MCF 10A (cell line): ENCODE measurements at regions of chr14 and their contacts with region 1.

Region 1: DNA sequence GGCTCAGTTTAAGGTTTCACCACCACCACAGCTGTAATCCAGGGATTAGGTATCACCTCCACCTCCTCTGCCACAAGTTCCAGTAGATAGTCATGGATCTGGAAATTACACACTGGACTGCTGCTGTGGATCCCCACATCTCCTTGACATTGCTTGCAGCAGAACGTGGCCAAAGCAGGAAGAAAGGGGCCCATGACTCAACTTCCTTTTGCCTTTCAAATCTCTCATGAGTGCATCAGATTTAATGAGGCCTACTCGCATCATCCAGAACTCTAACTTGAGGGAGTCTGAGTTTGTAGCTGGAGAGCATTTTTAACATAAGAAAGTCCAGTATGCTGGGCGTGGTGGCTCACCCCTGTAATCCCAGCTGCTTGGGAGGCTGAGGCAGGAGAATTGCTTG is 29.2 kb upstream of the TMED10 start:
- DNase-seq: peak; percentile 12
- H3K4me3 Mint-ChIP-seq: no peak overlapping the region
- H3K27ac Mint-ChIP-seq: no peak overlapping the region
- H3K4me1 Mint-ChIP-seq: peaks cover 20% of the 10 kb centered on the region
- H3K27me3 Mint-ChIP-seq: no peaks in the 10 kb centered on the region
- CTCF ChIP-seq: no peak

Region 2: DNA sequence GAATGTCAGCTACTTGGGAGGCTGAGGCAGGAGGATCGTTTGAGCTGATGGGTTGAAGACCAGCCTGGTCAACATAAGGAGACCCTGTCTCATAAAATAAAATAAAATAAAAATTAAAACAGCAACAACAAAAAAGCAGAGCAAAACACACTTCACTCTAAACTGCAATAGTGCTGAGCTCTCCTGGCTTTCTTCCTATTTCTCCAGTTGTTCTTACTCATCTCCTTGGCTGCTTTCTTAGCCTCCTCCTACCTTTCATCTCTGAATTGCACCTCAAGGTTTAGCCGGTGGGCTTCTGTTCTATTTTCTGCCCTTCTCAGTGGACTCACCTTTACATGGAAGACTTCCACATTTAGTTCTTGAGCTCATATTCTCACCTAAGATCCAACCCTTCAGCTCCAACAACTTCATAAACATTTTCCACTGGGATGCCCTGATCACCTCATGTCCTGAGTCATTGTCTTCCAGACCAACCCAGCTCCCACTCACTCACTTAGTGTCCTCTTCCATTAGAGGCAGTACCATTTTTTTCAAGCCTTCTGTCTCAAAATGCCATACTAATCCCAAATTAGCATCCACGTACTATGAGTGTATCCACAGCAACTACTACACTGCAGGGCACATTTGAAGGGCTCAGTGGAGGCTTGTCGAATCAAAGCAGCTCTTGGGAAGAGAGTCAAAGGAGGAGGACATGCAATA is 12.1 kb after region 1 on chr14:
- CTCF ChIA-PET with region 1: interaction called, 11 read pairs
- POLR2A ChIA-PET with region 1: interaction called, 13 read pairs
- intact Hi-C with region 1: no loop called
- DNase-seq: no peak
- H3K4me3 Mint-ChIP-seq: no peak overlapping the region
- H3K27ac Mint-ChIP-seq: no peak overlapping the region
- H3K4me1 Mint-ChIP-seq: peaks cover 19% of the 10 kb centered on the region
- H3K27me3 Mint-ChIP-seq: no peaks in the 10 kb centered on the region
- CTCF ChIP-seq: no peak